ENCODE measurements at regions of chr3 and their contacts with region 1.

Region 1: GRCh38 chr3:124059580-124059979 is 67.7 kb upstream of the ROPN1 start:
- DNase-seq: no peak

Region 2: GRCh38 chr3:122969585-122970453 is 1089.8 kb before region 1 on chr3:
- intact Hi-C with region 1: loop called in 1 of 2 experiments (anchors 5 kb)
- DNase-seq: no peak

Region 3: GRCh38 chr3:123595396-123596180 is 464.0 kb before region 1 on chr3:
- intact Hi-C with region 1: no loop called
- DNase-seq: no peak

Region 4: DNA sequence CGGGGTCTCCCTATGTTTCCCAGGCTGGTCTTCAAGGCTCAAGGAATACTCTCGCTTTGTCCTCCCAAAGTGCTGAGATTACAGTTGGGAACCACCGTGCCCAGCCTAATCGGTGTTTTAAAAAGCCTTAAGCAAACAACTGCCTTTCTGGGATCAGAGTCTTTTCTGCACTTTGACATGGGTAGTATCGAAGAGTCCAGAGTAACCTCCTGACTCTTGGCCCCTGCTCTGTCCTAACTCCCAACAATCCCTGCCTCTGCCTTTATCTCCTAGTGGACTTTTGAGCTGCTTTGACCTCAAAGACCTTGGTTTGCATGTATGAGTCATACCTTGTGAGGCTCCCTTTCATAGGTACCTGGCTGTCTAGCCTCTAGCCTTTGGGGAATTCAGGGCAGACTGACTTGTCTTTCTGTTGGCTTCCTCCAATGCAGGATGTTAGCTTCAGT is 453.8 kb before region 1 on chr3:
- intact Hi-C with region 1: no loop called
- DNase-seq: no peak

Region 5: GRCh38 chr3:123843668-123844067 is 215.9 kb before region 1 on chr3:
- intact Hi-C with region 1: no loop called
- DNase-seq: no peak

Region 6: DNA sequence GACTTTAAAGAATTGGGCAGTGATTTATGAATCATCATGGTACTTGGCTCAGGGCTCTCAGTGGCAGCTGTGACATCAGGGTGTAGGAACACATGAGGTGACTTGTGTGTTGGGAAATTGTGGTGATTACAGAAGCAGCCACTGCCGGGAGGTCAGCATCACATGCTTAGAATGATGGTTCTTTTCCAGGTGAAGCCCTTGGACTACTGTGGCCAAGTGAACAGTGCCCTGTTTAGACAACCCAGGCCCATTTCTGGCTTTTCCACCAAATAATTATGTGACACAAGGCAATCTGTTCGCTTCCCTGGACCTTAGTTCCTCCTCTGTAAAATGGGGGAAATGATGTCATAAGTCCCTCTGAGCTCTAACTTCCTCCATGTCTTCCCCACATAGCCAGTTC is 72.0 kb after region 1 on chr3:
- intact Hi-C with region 1: no loop called
- DNase-seq: no peak